CD8-positive, alpha-beta T cell (primary cell): ENCODE measurements at regions of chr2 and their contacts with region 1.

Region 1: DNA sequence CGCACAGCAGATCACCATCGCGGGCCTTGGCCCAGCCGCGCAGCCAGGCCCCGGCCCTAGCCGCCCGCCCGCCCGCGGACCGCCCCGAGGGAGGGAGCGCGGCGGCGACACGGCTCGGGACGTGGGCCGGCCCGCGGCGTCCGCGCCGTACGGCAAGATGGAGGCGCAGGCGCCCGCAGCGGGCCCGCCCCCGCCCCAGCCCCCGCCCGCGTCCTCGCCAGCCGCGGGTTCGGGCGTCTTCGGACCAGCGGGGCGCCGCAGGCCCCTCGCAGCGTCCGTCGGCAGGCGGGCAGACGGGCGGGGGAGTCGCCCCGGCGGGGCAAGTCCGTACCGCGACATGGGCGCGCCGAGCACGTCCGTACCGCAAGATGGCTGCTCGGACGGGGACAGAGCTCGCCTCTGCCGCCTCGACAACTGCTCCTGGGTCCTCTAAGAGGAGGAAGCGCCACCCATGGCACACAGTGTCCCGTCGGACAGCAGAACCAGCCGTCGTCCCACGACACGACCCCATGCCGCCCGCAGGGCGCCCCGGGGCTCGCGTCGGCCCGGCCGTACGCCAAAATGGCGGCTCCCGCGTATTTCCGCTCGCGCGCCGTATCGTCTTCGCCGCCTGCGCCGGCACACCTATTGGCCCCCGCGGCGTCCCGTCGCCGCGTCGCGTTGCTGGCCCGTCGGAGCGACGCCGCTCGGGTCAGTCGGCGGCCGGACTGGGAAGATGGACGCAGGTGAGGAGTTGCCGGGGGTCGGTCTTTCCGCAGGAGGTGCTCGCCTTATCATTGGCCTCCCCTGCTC is at the starts of genes ATG4B and THAP4:
- DNase-seq: peak; percentile 46 to 88 (median 76)
- ATAC-seq: peak; percentile 71
- H3K4me3 ChIP-seq: peak within 1 kb of the TSS; percentile 83 to 95
- H3K4me3 Mint-ChIP-seq: peak within 1 kb of the TSS; percentile 89
- H3K27ac ChIP-seq: peak within 1 kb of the TSS; percentile 80 to 96
- H3K27ac Mint-ChIP-seq: peak within 1 kb of the TSS; percentile 92
- H3K4me1 ChIP-seq: peaks cover 37% of the 10 kb centered on the region
- H3K4me1 Mint-ChIP-seq: peaks cover 55% of the 10 kb centered on the region
- H3K27me3 ChIP-seq: no peaks in the 10 kb centered on the region
- H3K27me3 Mint-ChIP-seq: no peaks in the 10 kb centered on the region
- CTCF ChIP-seq: no peak
- total RNA-seq, gene ATG4B: 94.0 to 94.5 TPM
- total RNA-seq, gene THAP4: 19.5 to 24.3 TPM

Region 2: DNA sequence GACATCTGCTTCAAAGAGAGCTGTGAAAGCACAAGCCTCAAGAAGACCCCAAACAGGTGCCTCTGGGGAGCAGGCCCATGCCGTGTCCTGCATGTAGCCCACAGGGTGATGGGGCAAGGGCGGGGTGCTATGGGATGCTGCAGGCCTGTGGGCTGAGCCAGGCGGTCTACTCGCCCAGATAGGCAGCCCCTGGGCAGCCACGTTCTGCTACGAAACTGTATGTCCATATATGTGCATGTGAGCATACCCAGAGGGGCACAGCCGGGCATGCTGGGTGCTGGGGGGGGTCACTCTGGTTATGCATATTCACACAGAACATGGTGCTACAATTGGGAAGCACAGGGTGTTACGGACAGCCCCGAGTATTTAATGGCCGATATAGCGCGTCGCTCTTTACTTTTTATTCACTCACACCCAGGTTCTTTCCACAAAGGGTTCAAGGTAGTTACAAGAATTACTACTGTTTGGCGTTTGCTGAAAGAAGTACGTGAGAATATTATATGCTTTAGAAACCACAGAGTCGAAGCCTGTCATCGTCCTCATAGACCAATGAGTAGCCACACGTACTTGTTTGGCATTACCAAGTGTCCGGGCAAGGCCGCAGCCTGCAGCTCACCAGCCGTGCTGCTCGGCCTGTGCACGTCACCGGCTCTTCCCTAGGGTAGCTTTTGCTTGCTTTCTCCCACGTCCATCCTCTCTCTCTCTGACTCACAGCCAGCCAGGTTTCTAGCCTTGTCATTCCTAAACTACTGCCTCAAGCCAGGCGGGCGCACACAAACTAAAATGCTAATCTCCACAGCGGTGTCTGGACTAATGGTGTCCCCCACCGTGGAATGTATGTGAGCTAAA is 549.6 kb before region 1 on chr2:
- CTCF ChIA-PET with region 1: no interaction called
- POLR2A ChIA-PET with region 1: no interaction called
- intact Hi-C with region 1: no loop called
- DNase-seq: no peak
- ATAC-seq: no peak
- H3K4me3 ChIP-seq: no peak overlapping the region
- H3K4me3 Mint-ChIP-seq: no peak overlapping the region
- H3K27ac ChIP-seq: no peak overlapping the region
- H3K27ac Mint-ChIP-seq: peak overlapping the region; percentile 83
- H3K4me1 ChIP-seq: peaks cover 14% of the 10 kb centered on the region
- H3K4me1 Mint-ChIP-seq: peaks cover 40% of the 10 kb centered on the region
- H3K27me3 ChIP-seq: no peaks in the 10 kb centered on the region
- H3K27me3 Mint-ChIP-seq: no peaks in the 10 kb centered on the region
- CTCF ChIP-seq: no peak

Region 3: DNA sequence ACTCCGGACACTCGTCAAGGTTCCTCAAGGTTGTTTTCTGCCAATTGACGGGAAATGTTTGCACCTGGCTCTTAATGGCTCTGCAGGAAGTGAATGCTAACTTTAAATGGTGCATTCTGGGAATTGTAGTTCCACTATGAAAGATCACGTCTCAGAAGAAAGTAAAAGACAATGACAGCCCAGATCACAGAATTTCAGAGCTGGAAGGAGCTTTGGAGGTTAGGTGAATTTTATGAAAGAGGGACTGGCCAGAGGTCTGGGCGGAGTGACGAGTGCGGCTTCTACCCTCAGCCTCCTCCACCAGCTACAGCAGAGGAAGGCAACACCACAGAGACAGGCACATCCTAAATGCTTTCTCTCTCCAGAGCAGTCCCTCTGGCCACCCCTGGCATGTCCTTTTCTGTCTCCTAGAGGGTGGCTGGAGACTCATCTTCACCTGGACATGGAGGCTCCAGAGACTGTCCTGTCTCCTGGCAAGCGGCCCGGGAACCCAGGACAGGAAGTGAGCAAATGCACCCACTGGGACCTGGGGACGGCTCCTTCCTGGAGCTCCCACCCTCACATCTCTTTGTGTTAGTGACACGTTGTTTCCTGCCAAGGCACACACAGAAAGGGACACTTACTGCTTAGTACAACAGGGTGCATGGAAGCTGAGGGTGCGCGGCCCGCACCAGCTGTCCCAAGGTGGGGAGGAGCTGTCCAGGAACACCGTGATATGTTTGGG is 19.6 kb before region 1 on chr2:
- CTCF ChIA-PET with region 1: no interaction called
- POLR2A ChIA-PET with region 1: interaction called, 3 read pairs
- intact Hi-C with region 1: loop called (anchors 1 kb)
- DNase-seq: peak in 6 of 9 experiments; percentile 11 to 80 (median 46)
- ATAC-seq: peak; percentile 86
- H3K4me3 ChIP-seq: peak overlapping the region; percentile 55 to 73
- H3K4me3 Mint-ChIP-seq: peak overlapping the region; percentile 89
- H3K27ac ChIP-seq: peak overlapping the region; percentile 61 to 70
- H3K27ac Mint-ChIP-seq: peak overlapping the region; percentile 88
- H3K4me1 ChIP-seq: peaks cover 15% of the 10 kb centered on the region
- H3K4me1 Mint-ChIP-seq: peaks cover 31% of the 10 kb centered on the region
- H3K27me3 ChIP-seq: no peaks in the 10 kb centered on the region
- H3K27me3 Mint-ChIP-seq: no peaks in the 10 kb centered on the region
- CTCF ChIP-seq: no peak

Region 4: GRCh38 chr2:241734467-241735208 is 97.4 kb after region 1 on chr2 and contains the start of gene D2HGDH:
- CTCF ChIA-PET with region 1: no interaction called
- POLR2A ChIA-PET with region 1: no interaction called
- intact Hi-C with region 1: loop called in 1 of 2 experiments (anchors 1 kb)
- DNase-seq: peak; percentile 84 to 97 (median 94)
- ATAC-seq: peak; percentile 92
- H3K4me3 ChIP-seq: peak within 1 kb of the TSS; percentile 68 to 70
- H3K4me3 Mint-ChIP-seq: peak within 1 kb of the TSS; percentile 86
- H3K27ac ChIP-seq: peak within 1 kb of the TSS; percentile 26 to 65
- H3K27ac Mint-ChIP-seq: peak within 1 kb of the TSS; percentile 85
- H3K4me1 ChIP-seq: peaks cover 22% of the 10 kb centered on the region
- H3K4me1 Mint-ChIP-seq: peaks cover 25% of the 10 kb centered on the region
- H3K27me3 ChIP-seq: no peaks in the 10 kb centered on the region
- H3K27me3 Mint-ChIP-seq: no peaks in the 10 kb centered on the region
- CTCF ChIP-seq: no peak
- total RNA-seq, gene D2HGDH: 41.6 to 46.4 TPM